ENCODE measurements at regions of chr4 and their contacts with region 1.

Region 1: GRCh38 chr4:173852775-173853174 is 322.7 kb upstream of the HAND2 start:
- DNase-seq: peak in 1 of 4 experiments; percentile 7
- ATAC-seq: peak; percentile 68
- H3K4me3 ChIP-seq: no peak overlapping the region
- H3K27ac ChIP-seq: no peak overlapping the region
- H3K4me1 ChIP-seq: no peaks in the 10 kb centered on the region
- H3K27me3 ChIP-seq: no peaks in the 10 kb centered on the region
- CTCF ChIP-seq: no peak
- EP300 ChIP-seq: no peak
- POLR2A ChIP-seq: no peak
- RAD21 ChIP-seq: no peak

Region 2: GRCh38 chr4:173990126-173990868 is 137.5 kb after region 1 on chr4:
- CTCF ChIA-PET with region 1: no interaction called
- POLR2A ChIA-PET with region 1: no interaction called
- in situ Hi-C with region 1: no loop called
- intact Hi-C with region 1: loop called (anchors 2 kb)
- DNase-seq: peak in 2 of 4 experiments; percentile 15 to 41
- ATAC-seq: peak; percentile 88
- H3K4me3 ChIP-seq: no peak overlapping the region
- H3K27ac ChIP-seq: no peak overlapping the region
- H3K4me1 ChIP-seq: peaks cover 0 to 3% of the 10 kb centered on the region in 2 experiments; a peak in 2 of 5 replicates
- H3K27me3 ChIP-seq: no peaks in the 10 kb centered on the region
- CTCF ChIP-seq: peak; percentile 38 to 54 (median 50); a peak in 5 of 6 replicates
- EP300 ChIP-seq: no peak
- POLR2A ChIP-seq: no peak
- RAD21 ChIP-seq: peak; percentile 43 to 44; a peak in 3 of 4 replicates